OCI-LY7 (cell line): ENCODE measurements at regions of chr4 and their contacts with region 1.

Region 1: DNA sequence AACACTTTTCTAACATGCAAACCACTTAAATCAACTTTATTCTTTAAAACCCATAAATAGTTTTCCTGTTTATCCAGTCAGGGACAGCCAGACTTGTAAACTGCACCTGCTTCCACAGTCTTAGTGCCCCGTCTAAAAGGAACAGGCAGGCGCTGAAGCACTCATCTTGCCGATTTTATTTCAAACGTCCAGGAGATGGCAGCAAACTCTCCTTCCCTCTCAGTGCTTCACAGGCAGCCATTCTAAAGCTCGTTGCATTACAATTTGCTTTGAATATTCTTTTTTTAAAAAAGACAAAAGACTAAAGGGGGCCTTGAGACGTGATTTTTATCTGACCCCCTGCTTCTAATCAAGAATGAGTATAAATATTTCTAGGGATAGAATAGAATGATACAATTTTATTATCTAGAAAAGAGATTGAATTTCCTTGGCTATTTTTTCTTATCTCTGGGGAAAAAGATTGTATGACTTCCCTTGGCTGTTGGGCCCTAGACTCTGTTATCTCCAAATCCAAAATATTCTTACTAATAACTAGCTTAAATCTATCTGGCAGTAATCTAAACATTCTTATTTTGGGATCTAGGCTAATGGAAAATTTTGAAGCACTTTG is 93.6 kb upstream of the MYOZ2 start:
- DNase-seq: peak; percentile 81
- H3K4me3 ChIP-seq: no peak overlapping the region
- H3K27ac ChIP-seq: peak overlapping the region; percentile 6
- H3K4me1 ChIP-seq: peaks cover 22% of the 10 kb centered on the region
- CTCF ChIP-seq: peak; percentile 89

Region 2: DNA sequence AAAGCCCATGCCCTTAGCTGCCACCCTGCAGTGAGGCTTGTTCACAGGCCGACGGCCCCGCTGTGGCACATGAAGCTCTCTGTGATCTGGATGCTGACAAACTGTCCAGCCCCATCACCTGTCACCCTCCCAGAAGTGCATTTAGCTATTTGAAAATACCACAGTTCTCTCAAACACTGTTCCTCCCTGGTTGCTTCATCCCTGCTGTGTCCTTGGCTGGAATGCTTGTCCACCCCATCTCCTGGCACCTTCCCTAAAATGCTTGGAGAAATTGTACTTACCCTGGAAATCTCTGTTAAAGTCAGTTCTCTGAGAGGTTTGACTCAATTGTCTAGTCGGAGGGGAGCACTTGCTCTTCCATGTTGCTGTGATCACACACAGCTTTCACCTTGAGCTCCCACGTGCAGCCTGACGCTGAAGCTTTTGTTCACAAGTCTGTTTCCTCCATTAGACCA is 143.3 kb before region 1 on chr4:
- CTCF ChIA-PET with region 1: no interaction called
- POLR2A ChIA-PET with region 1: no interaction called
- intact Hi-C with region 1: no loop called
- DNase-seq: no peak
- H3K4me3 ChIP-seq: no peak overlapping the region
- H3K27ac ChIP-seq: no peak overlapping the region
- H3K4me1 ChIP-seq: no peaks in the 10 kb centered on the region
- CTCF ChIP-seq: no peak

Region 3: GRCh38 chr4:119490335-119490734 is 448.3 kb after region 1 on chr4:
- CTCF ChIA-PET with region 1: no interaction called
- POLR2A ChIA-PET with region 1: interaction called, 4 read pairs
- intact Hi-C with region 1: loop called (anchors 1 kb)
- DNase-seq: peak; percentile 32
- H3K4me3 ChIP-seq: no peak overlapping the region
- H3K27ac ChIP-seq: no peak overlapping the region
- H3K4me1 ChIP-seq: no peaks in the 10 kb centered on the region
- CTCF ChIP-seq: peak; percentile 58